ENCODE measurements at regions of chr4 and their contacts with region 1.

Region 1: DNA sequence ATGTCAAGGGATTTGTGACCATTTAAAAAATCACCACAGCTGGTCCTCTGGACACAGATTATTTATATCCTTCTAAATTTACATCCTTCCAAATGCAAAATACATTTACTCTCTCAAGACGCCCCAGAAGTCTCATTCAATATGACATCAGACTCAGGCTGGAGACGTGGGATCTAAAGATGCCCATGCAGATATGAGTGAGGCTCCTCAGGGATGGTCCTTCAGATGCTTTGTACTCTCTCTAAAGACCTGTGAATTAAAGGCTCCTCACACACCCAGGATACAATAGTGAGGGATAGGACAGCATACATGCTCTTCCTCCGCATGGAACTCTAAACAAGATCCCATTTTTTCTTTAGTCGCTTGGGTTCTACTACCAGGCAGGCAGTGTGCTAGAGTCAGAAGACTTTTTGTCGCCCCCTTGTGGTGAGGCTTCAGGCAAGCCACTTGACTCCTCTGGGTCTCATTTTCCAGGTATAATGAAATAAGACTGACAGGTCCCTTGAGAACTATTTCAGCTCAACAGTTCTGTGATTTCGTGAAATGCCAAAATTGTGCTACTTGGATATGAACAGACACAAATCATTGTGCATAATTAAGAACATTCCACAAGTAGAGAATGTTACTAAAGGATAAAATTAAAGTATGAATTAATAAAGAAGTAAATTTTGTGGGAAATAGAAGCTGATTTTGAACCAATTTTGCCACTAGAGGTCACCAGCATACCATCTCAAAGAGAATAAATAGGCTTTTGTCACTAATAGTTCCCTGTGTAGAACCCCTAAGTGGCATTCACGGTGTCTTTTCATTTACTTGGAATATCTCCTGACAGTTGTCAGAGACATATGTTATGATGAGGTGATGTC is 13.7 kb upstream of the SCOC start:
- DNase-seq: peak; percentile 45 to 85
- ATAC-seq: peak; percentile 97 to 100
- H3K4me3 ChIP-seq: no peak overlapping the region
- H3K27ac ChIP-seq: no peak overlapping the region
- H3K4me1 ChIP-seq: no peaks in the 10 kb centered on the region
- CTCF ChIP-seq: peak; percentile 88
- EP300 ChIP-seq: no peak
- POLR2A ChIP-seq: no peak
- RAD21 ChIP-seq: peak; percentile 57 to 76

Region 2: GRCh38 chr4:140018931-140019618 is 340.7 kb before region 1 on chr4:
- CTCF ChIA-PET with region 1: no interaction called
- POLR2A ChIA-PET with region 1: no interaction called
- DNase-seq: peak in 1 of 2 experiments; percentile 91
- ATAC-seq: peak; percentile 77 to 87
- H3K4me3 ChIP-seq: peak overlapping the region; percentile 19; the same call in 1 of the 3 replicates
- H3K27ac ChIP-seq: peak overlapping the region; percentile 93
- H3K4me1 ChIP-seq: peaks cover 76% of the 10 kb centered on the region
- CTCF ChIP-seq: no peak
- EP300 ChIP-seq: peak in 1 of 2 experiments; percentile 20; a peak in 1 of 5 replicates
- POLR2A ChIP-seq: no peak
- RAD21 ChIP-seq: peak; percentile 17 to 20; a peak in 1 of 5 replicates

Region 3: GRCh38 chr4:140308366-140309123 is 51.2 kb before region 1 on chr4:
- CTCF ChIA-PET with region 1: interaction called, 11 read pairs
- POLR2A ChIA-PET with region 1: no interaction called
- DNase-seq: peak in 1 of 2 experiments; percentile 14
- ATAC-seq: peak; percentile 54 to 55; a peak in 4 of 6 replicates
- H3K4me3 ChIP-seq: no peak overlapping the region
- H3K27ac ChIP-seq: 0 out of 6 replicates have a peak overlapping the region, but pooled peaks of 1 of the 2 experiments have one; percentile 16
- H3K4me1 ChIP-seq: peaks cover 14% of the 10 kb centered on the region; the same call in 2 of the 3 replicates
- CTCF ChIP-seq: no peak
- EP300 ChIP-seq: no peak
- POLR2A ChIP-seq: no peak
- RAD21 ChIP-seq: no peak

Region 4: GRCh38 chr4:140373328-140374129 is 13.7 kb after region 1 on chr4 and contains the start of gene SCOC:
- CTCF ChIA-PET with region 1: interaction called, 38 read pairs
- POLR2A ChIA-PET with region 1: interaction called, 4 read pairs
- DNase-seq: peak; percentile 96 to 98
- ATAC-seq: peak; percentile 96 to 98
- H3K4me3 ChIP-seq: peak within 1 kb of the TSS; percentile 93
- H3K27ac ChIP-seq: peak within 1 kb of the TSS; percentile 83 to 96
- H3K4me1 ChIP-seq: peaks cover 25% of the 10 kb centered on the region
- CTCF ChIP-seq: no peak
- EP300 ChIP-seq: no peak
- POLR2A ChIP-seq: peak; percentile 41
- RAD21 ChIP-seq: no peak
- polyA plus RNA-seq, gene SCOC: 49.7 and 71.9 TPM in 2 replicates

Region 5: DNA sequence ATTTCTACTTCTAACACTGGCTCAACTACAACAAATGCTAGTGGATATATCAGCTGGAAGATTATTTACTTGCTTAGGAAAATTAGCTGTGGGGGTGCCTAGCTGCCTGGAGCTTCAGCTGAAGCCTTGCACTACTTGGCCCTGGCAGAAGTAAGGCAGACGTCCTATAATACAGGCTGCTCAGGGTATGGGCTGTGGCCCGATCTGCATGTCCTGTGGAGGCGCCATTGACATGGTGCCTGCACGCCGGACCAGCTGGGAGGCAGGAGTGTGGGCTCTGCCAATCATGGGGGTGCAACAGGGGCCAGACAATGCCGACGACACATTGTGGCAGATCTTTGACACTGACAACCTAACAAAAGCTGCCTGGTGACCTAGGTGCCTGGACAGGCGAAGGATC is 240.6 kb after region 1 on chr4:
- CTCF ChIA-PET with region 1: interaction called, 10 read pairs
- POLR2A ChIA-PET with region 1: no interaction called
- DNase-seq: no peak
- ATAC-seq: no peak
- H3K4me3 ChIP-seq: no peak overlapping the region
- H3K27ac ChIP-seq: no peak overlapping the region
- H3K4me1 ChIP-seq: no peaks in the 10 kb centered on the region
- CTCF ChIP-seq: no peak
- EP300 ChIP-seq: no peak
- POLR2A ChIP-seq: no peak
- RAD21 ChIP-seq: no peak

Region 6: GRCh38 chr4:140851032-140851636 is 491.3 kb after region 1 on chr4:
- CTCF ChIA-PET with region 1: interaction called, 30 read pairs
- POLR2A ChIA-PET with region 1: no interaction called
- DNase-seq: peak; percentile 49
- ATAC-seq: peak; percentile 62 to 80; a peak in 3 of 6 replicates
- H3K4me3 ChIP-seq: no peak overlapping the region
- H3K27ac ChIP-seq: no peak overlapping the region
- H3K4me1 ChIP-seq: no peaks in the 10 kb centered on the region
- CTCF ChIP-seq: peak; percentile 85
- EP300 ChIP-seq: no peak
- POLR2A ChIP-seq: no peak
- RAD21 ChIP-seq: peak; percentile 90 to 91

Measured in A549 (cell line).